ENCODE measurements at regions of chr2 and their contacts with region 1.

Region 1: DNA sequence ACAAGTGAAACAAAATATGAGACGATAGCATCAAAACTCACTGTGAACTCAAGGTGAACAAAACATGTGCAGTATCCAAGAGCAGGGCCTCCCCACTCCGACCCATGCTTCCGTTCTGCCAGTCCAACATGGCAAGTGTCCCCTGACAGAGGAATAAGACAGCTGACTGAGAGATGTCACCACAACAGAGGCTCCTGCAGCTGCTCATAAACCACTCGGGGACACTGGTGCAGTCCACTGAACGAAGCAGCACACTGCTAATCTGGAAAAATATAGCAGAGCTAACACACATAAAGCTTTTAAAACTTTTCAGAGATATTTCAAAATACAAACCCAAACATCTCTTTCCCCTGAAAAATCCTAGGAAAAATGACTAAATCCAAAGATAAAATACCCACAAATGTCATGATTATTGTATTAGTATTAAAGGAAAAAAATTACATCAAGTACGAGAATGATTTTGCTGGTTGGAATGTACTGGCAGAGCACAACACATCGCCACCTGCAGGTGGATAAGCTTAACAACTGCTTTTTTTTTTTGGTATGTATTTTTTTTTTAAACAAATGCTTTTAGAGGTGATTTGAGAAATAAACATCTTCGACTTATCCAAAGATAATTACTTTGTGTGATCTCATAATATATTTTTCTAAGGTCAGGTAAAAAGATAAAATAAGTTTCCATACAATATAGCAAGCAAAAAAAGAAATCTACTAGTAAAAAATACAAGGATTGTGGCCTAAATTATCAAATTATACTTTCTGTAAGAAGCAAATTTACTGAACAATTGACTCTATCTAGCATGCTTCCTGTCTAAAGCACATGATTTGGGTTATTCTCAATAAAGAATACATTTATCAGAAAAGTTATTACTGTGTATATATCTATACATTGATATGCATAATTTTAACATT is 18.6 kb downstream of the THADA start:
- DNase-seq: peak; percentile 44
- H3K4me3 Mint-ChIP-seq: no peak overlapping the region
- H3K27ac Mint-ChIP-seq: no peak overlapping the region
- H3K4me1 Mint-ChIP-seq: peaks cover 12% of the 10 kb centered on the region
- H3K27me3 Mint-ChIP-seq: no peaks in the 10 kb centered on the region

Region 2: GRCh38 chr2:43559391-43560230 is 17.6 kb before region 1 on chr2:
- CTCF ChIA-PET with region 1: interaction called, 19 read pairs
- DNase-seq: no peak
- H3K4me3 Mint-ChIP-seq: peak overlapping the region; percentile 26
- H3K27ac Mint-ChIP-seq: peak overlapping the region; percentile 88
- H3K4me1 Mint-ChIP-seq: peaks cover 49% of the 10 kb centered on the region
- H3K27me3 Mint-ChIP-seq: no peaks in the 10 kb centered on the region